ENCODE measurements at regions of chr10 and their contacts with region 1.

Region 1: GRCh38 chr10:87915989-87916388 is 52.6 kb downstream of the PTEN start:
- DNase-seq: no peak
- ATAC-seq: no peak
- H3K4me3 ChIP-seq: no peak overlapping the region
- H3K4me3 Mint-ChIP-seq: peak overlapping the region; percentile 32
- H3K27ac ChIP-seq: no peak overlapping the region
- H3K27ac Mint-ChIP-seq: peak overlapping the region; percentile 25
- H3K4me1 ChIP-seq: peaks cover 15% of the 10 kb centered on the region
- H3K4me1 Mint-ChIP-seq: peaks cover 73% of the 10 kb centered on the region
- H3K27me3 ChIP-seq: no peaks in the 10 kb centered on the region
- H3K27me3 Mint-ChIP-seq: no peaks in the 10 kb centered on the region
- CTCF ChIP-seq: no peak

Region 2: DNA sequence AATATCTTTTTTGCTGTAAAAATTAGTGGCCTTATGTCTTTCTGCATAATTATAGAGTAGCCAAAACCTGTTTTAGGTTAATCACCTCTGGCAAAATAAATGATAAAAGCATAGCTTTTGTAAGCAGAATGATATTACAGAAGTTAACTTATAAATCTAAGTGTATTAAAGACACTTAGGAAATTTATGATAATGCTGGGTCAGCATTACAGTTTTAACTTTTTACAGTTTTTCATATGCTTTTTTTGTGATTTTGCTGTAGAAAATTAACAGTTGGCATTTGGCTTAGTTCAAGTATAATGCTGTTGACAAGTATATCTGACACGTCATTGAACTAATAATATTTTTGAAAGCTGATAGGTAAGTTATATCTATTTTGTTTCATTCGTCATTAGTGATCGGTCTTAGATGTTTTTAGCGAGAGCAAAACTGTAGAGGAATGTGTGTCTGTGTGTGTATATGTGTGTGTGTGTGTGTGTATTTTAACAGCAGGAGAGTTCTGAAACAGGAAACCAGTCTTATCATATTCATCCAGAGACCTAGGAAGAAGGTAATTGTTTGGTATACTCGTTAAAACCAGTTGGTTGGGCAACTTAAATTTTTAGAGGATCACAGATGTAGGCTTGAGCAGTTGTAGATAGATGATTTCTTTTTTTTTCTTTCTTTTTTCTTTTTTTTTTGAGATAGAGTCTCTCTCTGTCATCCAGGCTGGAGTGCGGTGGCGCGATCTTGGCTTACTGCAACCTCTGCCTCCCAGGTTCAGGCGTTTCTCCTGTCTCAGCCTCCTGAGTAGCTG is 37.1 kb before region 1 on chr10:
- CTCF ChIA-PET with region 1: no interaction called
- POLR2A ChIA-PET with region 1: no interaction called
- intact Hi-C with region 1: loop called in 1 of 2 experiments (anchors 5 kb)
- DNase-seq: no peak
- ATAC-seq: no peak
- H3K4me3 ChIP-seq: no peak overlapping the region
- H3K4me3 Mint-ChIP-seq: peak overlapping the region; percentile 0
- H3K27ac ChIP-seq: no peak overlapping the region
- H3K27ac Mint-ChIP-seq: peak overlapping the region; percentile 4
- H3K4me1 ChIP-seq: no peaks in the 10 kb centered on the region
- H3K4me1 Mint-ChIP-seq: peaks cover 70% of the 10 kb centered on the region
- H3K27me3 ChIP-seq: no peaks in the 10 kb centered on the region
- H3K27me3 Mint-ChIP-seq: no peaks in the 10 kb centered on the region
- CTCF ChIP-seq: no peak